H1 (cell line): ENCODE measurements at regions of chr2 and their contacts with region 1.

Region 1: GRCh38 chr2:20106746-20107145 is 55.3 kb upstream of the LAPTM4A start:
- DNase-seq: peak; percentile 21 to 94
- H3K4me3 ChIP-seq: peak overlapping the region in 3 of 4 experiments; percentile 27 to 48 (median 29); a peak in 5 of 8 replicates
- H3K27ac ChIP-seq: no peak overlapping the region
- H3K4me1 ChIP-seq: peaks cover 0 to 2% (median 0%) of the 10 kb centered on the region in 4 experiments; a peak in 1 of 7 replicates
- H3K27me3 ChIP-seq: peaks cover 0 to 5% (median 3%) of the 10 kb centered on the region in 4 experiments; a peak in 3 of 7 replicates
- CTCF ChIP-seq: peak; percentile 72 to 83 (median 73)
- EP300 ChIP-seq: no peak
- POLR2A ChIP-seq: no peak
- RAD21 ChIP-seq: peak; percentile 65 to 77

Region 2: DNA sequence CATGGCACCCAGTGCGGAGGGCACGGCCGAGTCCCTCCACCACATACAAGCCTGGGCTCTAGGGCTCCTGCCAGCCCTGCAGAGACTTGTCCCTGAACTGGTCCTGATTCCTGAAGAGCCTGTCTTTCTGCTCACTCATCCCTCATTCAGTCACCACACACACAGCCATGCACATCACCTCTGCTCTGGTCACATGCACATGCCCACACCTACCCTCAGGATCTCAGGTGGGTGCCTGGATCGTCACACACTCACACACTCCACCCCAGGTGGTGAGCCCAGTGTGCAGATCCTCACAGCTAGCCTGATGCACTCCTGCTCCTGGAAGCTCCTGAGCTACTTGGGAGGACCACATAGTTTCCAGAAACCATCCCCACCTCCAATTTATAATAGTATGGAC is 16.2 kb after region 1 on chr2:
- CTCF ChIA-PET with region 1: interaction called, 19 read pairs
- POLR2A ChIA-PET with region 1: interaction called, 3 read pairs
- DNase-seq: no peak
- H3K4me3 ChIP-seq: no peak overlapping the region
- H3K27ac ChIP-seq: no peak overlapping the region
- H3K4me1 ChIP-seq: peaks cover 0 to 2% (median 0%) of the 10 kb centered on the region in 4 experiments; a peak in 1 of 7 replicates
- H3K27me3 ChIP-seq: no peaks in the 10 kb centered on the region
- CTCF ChIP-seq: no peak
- EP300 ChIP-seq: no peak
- POLR2A ChIP-seq: no peak
- RAD21 ChIP-seq: no peak

Region 3: GRCh38 chr2:20186078-20186854 is 79.5 kb after region 1 on chr2:
- CTCF ChIA-PET with region 1: interaction called, 163 read pairs
- POLR2A ChIA-PET with region 1: interaction called, 3 read pairs
- DNase-seq: no peak
- H3K4me3 ChIP-seq: no peak overlapping the region
- H3K27ac ChIP-seq: no peak overlapping the region
- H3K4me1 ChIP-seq: peaks cover 0 to 39% (median 21%) of the 10 kb centered on the region in 4 experiments; a peak in 6 of 7 replicates
- H3K27me3 ChIP-seq: no peaks in the 10 kb centered on the region; a peak in 3 of 7 replicates
- CTCF ChIP-seq: no peak
- EP300 ChIP-seq: no peak
- POLR2A ChIP-seq: no peak
- RAD21 ChIP-seq: no peak

Region 4: DNA sequence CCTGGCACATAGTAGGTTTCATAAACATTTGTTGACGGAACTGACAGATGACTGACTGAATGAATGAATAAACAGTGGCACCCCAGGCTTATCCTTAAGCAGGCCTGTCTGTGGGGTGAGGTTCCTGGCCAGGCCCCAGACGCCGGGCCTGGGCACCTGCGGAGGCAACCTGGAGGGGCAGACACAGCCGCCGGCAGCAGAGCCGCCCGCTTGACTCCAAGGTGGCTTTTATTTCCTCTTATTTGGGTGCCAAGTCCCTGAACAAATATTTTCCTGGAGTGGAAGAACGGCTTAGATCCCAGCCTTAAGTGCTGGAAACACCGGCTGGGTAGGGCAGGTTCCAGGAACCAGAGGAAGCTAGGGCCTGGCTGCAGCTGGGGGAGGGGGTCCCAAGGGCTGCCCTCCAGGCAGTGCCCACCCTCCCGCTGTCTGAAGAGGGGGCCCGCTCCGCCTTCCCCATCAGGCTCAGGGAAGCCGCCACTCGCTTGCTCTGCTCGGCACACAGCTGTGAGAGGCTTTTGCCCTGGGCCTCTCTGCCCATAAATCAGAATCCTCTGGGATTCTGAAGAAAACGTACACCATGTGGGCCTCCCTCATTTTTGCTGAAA is 89.9 kb after region 1 on chr2:
- CTCF ChIA-PET with region 1: interaction called, 163 read pairs
- POLR2A ChIA-PET with region 1: no interaction called
- DNase-seq: no peak
- H3K4me3 ChIP-seq: no peak overlapping the region
- H3K27ac ChIP-seq: no peak overlapping the region
- H3K4me1 ChIP-seq: peaks cover 0 to 5% (median 0%) of the 10 kb centered on the region in 4 experiments; a peak in 1 of 7 replicates
- H3K27me3 ChIP-seq: no peaks in the 10 kb centered on the region
- CTCF ChIP-seq: no peak
- EP300 ChIP-seq: no peak
- POLR2A ChIP-seq: no peak
- RAD21 ChIP-seq: no peak

Region 5: DNA sequence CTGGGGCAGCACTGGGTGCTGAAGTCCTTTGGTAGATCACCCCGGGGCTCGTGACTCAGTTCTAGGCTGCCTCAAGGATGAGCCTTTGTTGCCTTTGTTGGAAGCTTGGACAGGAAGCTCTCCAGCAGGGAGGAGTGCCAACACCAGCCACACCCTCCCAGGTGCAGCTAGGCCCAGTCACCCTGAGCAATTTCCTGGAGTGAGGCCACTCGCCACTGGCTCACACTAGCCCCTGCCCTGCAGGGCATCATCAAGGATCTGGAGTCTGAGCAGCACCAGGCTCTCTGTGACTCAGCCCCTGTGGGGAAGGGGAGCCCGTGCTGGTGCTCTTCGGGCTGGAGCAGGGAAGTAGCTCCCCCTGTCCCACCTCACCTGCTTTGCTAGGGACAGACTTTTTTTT is 124.9 kb after region 1 on chr2:
- CTCF ChIA-PET with region 1: interaction called, 39 read pairs
- POLR2A ChIA-PET with region 1: interaction called, 5 read pairs
- DNase-seq: peak; percentile 68 to 72
- H3K4me3 ChIP-seq: no peak overlapping the region
- H3K27ac ChIP-seq: no peak overlapping the region
- H3K4me1 ChIP-seq: peaks cover 3 to 11% (median 5%) of the 10 kb centered on the region in 4 experiments
- H3K27me3 ChIP-seq: no peaks in the 10 kb centered on the region; a peak in 1 of 7 replicates
- CTCF ChIP-seq: peak in 2 of 3 experiments; percentile 16 to 33; a peak in 2 of 4 replicates
- EP300 ChIP-seq: no peak
- POLR2A ChIP-seq: no peak
- RAD21 ChIP-seq: peak; percentile 32 to 33; a peak in 3 of 4 replicates